Activated CD4-positive, alpha-beta memory T cell treated with anti-CD3 and anti-CD28 coated beads for 36 hours (primary cell): ENCODE measurements at regions of chr20 and their contacts with region 1.

Region 1: GRCh38 chr20:19995220-19995863 is 21.8 kb upstream of the NAA20 start:
- DNase-seq: peak; percentile 47
- H3K4me3 Mint-ChIP-seq: no peak overlapping the region
- H3K27ac Mint-ChIP-seq: no peak overlapping the region
- H3K4me1 Mint-ChIP-seq: no peaks in the 10 kb centered on the region
- H3K27me3 Mint-ChIP-seq: peaks cover 8% of the 10 kb centered on the region

Region 2: DNA sequence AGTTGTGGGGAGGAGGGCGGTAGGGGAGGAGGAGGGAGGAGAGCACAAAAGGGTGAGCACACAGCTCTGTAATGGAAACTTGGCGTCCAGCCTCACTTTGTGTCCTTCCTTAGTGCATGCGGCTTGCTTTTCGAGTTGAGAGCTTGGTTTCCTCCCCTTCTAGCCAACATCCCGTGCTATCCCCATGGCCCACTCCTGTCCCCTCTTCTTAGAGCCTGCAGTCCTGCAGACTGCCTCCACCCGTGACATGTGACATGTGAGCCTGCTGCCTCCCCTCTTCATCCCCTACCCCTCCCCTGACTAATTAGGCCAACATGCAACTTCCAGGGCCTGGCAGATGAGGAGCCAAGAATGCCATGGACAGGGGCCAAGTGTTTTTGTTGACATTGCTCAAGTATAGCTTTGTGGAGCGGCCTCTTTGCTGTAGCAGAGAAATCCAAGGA is 719.7 kb before region 1 on chr20:
- CTCF ChIA-PET with region 1: no interaction called
- POLR2A ChIA-PET with region 1: no interaction called
- intact Hi-C with region 1: no loop called
- DNase-seq: no peak
- H3K4me3 Mint-ChIP-seq: no peak overlapping the region
- H3K27ac Mint-ChIP-seq: no peak overlapping the region
- H3K4me1 Mint-ChIP-seq: no peaks in the 10 kb centered on the region
- H3K27me3 Mint-ChIP-seq: no peaks in the 10 kb centered on the region

Region 3: GRCh38 chr20:19692685-19693119 is 302.6 kb before region 1 on chr20:
- CTCF ChIA-PET with region 1: interaction called, 9 read pairs
- POLR2A ChIA-PET with region 1: no interaction called
- intact Hi-C with region 1: loop called (anchors 1 kb)
- DNase-seq: peak; percentile 60
- H3K4me3 Mint-ChIP-seq: no peak overlapping the region
- H3K27ac Mint-ChIP-seq: no peak overlapping the region
- H3K4me1 Mint-ChIP-seq: peaks cover 4% of the 10 kb centered on the region
- H3K27me3 Mint-ChIP-seq: peaks cover 23% of the 10 kb centered on the region

Region 4: GRCh38 chr20:19903168-19903811 is 92.1 kb before region 1 on chr20:
- CTCF ChIA-PET with region 1: no interaction called
- POLR2A ChIA-PET with region 1: no interaction called
- intact Hi-C with region 1: loop called (anchors 10 kb)
- DNase-seq: peak; percentile 27
- H3K4me3 Mint-ChIP-seq: no peak overlapping the region
- H3K27ac Mint-ChIP-seq: no peak overlapping the region
- H3K4me1 Mint-ChIP-seq: peaks cover 3% of the 10 kb centered on the region
- H3K27me3 Mint-ChIP-seq: peaks cover 7% of the 10 kb centered on the region

Region 5: DNA sequence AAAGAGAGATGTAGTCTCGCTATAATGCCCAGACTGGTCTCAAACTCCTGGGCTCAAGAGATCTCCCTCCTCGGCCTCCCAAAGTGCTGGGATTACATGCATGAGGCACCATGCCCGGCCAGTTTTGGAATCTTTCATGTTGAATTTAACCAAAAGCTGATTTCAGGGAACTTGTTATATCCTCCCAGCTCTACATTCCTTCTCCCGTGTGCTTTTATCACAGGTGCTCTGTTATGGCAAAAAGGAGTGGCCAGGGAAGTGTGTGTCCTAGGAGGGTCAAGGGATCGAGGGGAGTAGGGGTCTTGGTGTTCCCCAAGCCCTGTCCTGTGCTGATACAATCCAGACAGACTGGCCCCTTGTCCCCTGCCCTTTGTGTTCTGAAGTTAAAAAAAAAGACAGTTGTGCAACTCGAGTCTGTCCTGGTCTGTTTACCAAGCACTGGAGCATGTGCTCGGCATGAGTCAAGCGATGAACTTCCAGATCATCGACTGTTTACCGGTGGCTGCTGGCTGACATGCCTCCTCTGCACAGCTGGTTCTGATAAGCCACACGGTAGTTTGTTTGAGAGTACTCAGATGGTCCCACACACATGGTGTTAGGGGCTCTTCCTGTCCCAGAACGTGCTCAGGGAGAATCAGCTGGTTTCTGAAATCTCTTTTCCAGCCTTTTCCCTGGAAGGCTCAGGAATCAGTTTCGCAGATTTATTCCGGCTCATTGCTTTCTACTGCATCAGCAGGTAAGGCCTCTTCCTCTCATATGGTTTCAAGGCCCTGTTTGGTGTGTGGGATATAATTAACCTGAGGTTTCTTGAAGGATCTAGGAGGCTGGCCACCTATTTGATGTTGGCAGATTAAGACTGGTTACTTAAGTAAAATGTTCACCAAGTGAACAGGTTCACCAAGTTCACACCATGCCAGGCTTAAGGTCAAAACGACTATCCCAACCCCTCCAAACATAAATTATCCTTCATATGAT is 30.8 kb before region 1 on chr20:
- CTCF ChIA-PET with region 1: no interaction called
- POLR2A ChIA-PET with region 1: no interaction called
- intact Hi-C with region 1: no loop called
- DNase-seq: no peak
- H3K4me3 Mint-ChIP-seq: no peak overlapping the region
- H3K27ac Mint-ChIP-seq: no peak overlapping the region
- H3K4me1 Mint-ChIP-seq: peaks cover 23% of the 10 kb centered on the region
- H3K27me3 Mint-ChIP-seq: no peaks in the 10 kb centered on the region